Activated naive CD4-positive, alpha-beta T cell treated with anti-CD3 and anti-CD28 coated beads for 36 hours (primary cell): ENCODE measurements at regions of chr12 and their contacts with region 1.

Region 1: GRCh38 chr12:68259318-68259940 is 6.0 kb upstream of the IL22 start:
- DNase-seq: peak; percentile 50
- H3K4me3 Mint-ChIP-seq: no peak overlapping the region
- H3K27ac Mint-ChIP-seq: peak overlapping the region; percentile 72
- H3K4me1 Mint-ChIP-seq: peaks cover 24% of the 10 kb centered on the region
- H3K27me3 Mint-ChIP-seq: peaks cover 16% of the 10 kb centered on the region

Region 2: GRCh38 chr12:68180792-68181744 is 78.4 kb before region 1 on chr12:
- CTCF ChIA-PET with region 1: no interaction called
- intact Hi-C with region 1: loop called (anchors 2 kb)
- DNase-seq: peak; percentile 70
- H3K4me3 Mint-ChIP-seq: no peak overlapping the region
- H3K27ac Mint-ChIP-seq: peak overlapping the region; percentile 93
- H3K4me1 Mint-ChIP-seq: peaks cover 56% of the 10 kb centered on the region
- H3K27me3 Mint-ChIP-seq: no peaks in the 10 kb centered on the region

Region 3: GRCh38 chr12:68236421-68237059 is 22.9 kb before region 1 on chr12:
- CTCF ChIA-PET with region 1: no interaction called
- intact Hi-C with region 1: loop called (anchors 1 kb)
- DNase-seq: peak; percentile 43
- H3K4me3 Mint-ChIP-seq: peak overlapping the region; percentile 75
- H3K27ac Mint-ChIP-seq: peak overlapping the region; percentile 57
- H3K4me1 Mint-ChIP-seq: peaks cover 48% of the 10 kb centered on the region
- H3K27me3 Mint-ChIP-seq: no peaks in the 10 kb centered on the region

Region 4: GRCh38 chr12:68279227-68280054 is 20.0 kb after region 1 on chr12:
- CTCF ChIA-PET with region 1: no interaction called
- intact Hi-C with region 1: loop called (anchors 1 kb)
- DNase-seq: no peak
- H3K4me3 Mint-ChIP-seq: no peak overlapping the region
- H3K27ac Mint-ChIP-seq: no peak overlapping the region
- H3K4me1 Mint-ChIP-seq: peaks cover 24% of the 10 kb centered on the region
- H3K27me3 Mint-ChIP-seq: peaks cover 22% of the 10 kb centered on the region